ENCODE measurements at regions of chr3 and their contacts with region 1.

Region 1: GRCh38 chr3:160413613-160414248 is 14.3 kb downstream of the SMC4 start:
- DNase-seq: peak; percentile 15 to 84 (median 70)
- ATAC-seq: peak; percentile 86
- H3K4me3 ChIP-seq: no peak overlapping the region
- H3K4me3 Mint-ChIP-seq: no peak overlapping the region
- H3K27ac ChIP-seq: no peak overlapping the region
- H3K27ac Mint-ChIP-seq: no peak overlapping the region
- H3K4me1 ChIP-seq: no peaks in the 10 kb centered on the region
- H3K4me1 Mint-ChIP-seq: peaks cover 5% of the 10 kb centered on the region
- H3K27me3 ChIP-seq: no peaks in the 10 kb centered on the region
- H3K27me3 Mint-ChIP-seq: no peaks in the 10 kb centered on the region
- CTCF ChIP-seq: peak; percentile 99

Region 2: GRCh38 chr3:158845765-158846350 is 1567.9 kb before region 1 on chr3:
- CTCF ChIA-PET with region 1: no interaction called
- POLR2A ChIA-PET with region 1: no interaction called
- intact Hi-C with region 1: loop called (anchors 2 kb)
- DNase-seq: peak in 5 of 9 experiments; percentile 17 to 63 (median 28)
- ATAC-seq: peak; percentile 57
- H3K4me3 ChIP-seq: no peak overlapping the region
- H3K4me3 Mint-ChIP-seq: no peak overlapping the region
- H3K27ac ChIP-seq: no peak overlapping the region
- H3K27ac Mint-ChIP-seq: no peak overlapping the region
- H3K4me1 ChIP-seq: peaks cover 4% of the 10 kb centered on the region
- H3K4me1 Mint-ChIP-seq: peaks cover 9% of the 10 kb centered on the region
- H3K27me3 ChIP-seq: no peaks in the 10 kb centered on the region
- H3K27me3 Mint-ChIP-seq: no peaks in the 10 kb centered on the region
- CTCF ChIP-seq: peak; percentile 87

Region 3: GRCh38 chr3:159828542-159828943 is 585.2 kb before region 1 on chr3:
- CTCF ChIA-PET with region 1: no interaction called
- POLR2A ChIA-PET with region 1: no interaction called
- intact Hi-C with region 1: loop called (anchors 5 kb)
- DNase-seq: peak in 1 of 9 experiments; percentile 18
- ATAC-seq: no peak
- H3K4me3 ChIP-seq: no peak overlapping the region
- H3K4me3 Mint-ChIP-seq: no peak overlapping the region
- H3K27ac ChIP-seq: no peak overlapping the region
- H3K27ac Mint-ChIP-seq: no peak overlapping the region
- H3K4me1 ChIP-seq: no peaks in the 10 kb centered on the region
- H3K4me1 Mint-ChIP-seq: no peaks in the 10 kb centered on the region
- H3K27me3 ChIP-seq: no peaks in the 10 kb centered on the region
- H3K27me3 Mint-ChIP-seq: peaks cover 4% of the 10 kb centered on the region
- CTCF ChIP-seq: no peak

Region 4: DNA sequence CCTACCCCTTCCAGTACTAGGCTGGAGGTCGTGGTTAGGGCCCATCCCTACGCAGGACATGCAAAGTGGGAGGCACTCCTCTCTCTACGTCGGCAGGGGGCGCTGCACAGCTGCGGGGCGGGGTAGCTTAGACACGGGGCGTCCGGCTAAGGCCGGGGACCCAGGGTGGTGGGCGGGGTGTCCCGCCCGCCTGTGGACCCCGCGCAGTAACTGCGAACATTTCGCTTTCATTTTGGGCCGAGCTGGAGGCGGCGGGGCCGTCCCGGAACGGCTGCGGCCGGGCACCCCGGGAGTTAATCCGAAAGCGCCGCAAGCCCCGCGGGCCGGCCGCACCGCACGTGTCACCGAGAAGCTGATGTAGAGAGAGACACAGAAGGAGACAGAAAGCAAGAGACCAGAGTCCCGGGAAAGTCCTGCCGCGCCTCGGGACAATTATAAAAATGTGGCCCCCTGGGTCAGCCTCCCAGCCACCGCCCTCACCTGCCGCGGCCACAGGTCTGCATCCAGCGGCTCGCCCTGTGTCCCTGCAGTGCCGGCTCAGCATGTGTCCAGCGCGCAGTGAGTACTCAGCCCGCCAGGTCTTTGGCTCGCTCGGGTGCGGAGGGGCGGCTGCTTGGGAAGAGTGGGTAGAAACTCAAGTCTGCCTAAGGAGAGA is 425.0 kb before region 1 on chr3 and contains the start of gene IL12A:
- CTCF ChIA-PET with region 1: interaction called, 52 read pairs
- POLR2A ChIA-PET with region 1: no interaction called
- intact Hi-C with region 1: loop called (anchors 1 kb)
- DNase-seq: peak; percentile 68 to 89 (median 84)
- ATAC-seq: peak; percentile 98
- H3K4me3 ChIP-seq: peak within 1 kb of the TSS; percentile 70 to 74
- H3K4me3 Mint-ChIP-seq: peak within 1 kb of the TSS; percentile 87
- H3K27ac ChIP-seq: peak within 1 kb of the TSS; percentile 25 to 28
- H3K27ac Mint-ChIP-seq: peak within 1 kb of the TSS; percentile 27
- H3K4me1 ChIP-seq: peaks cover 15% of the 10 kb centered on the region
- H3K4me1 Mint-ChIP-seq: peaks cover 30% of the 10 kb centered on the region
- H3K27me3 ChIP-seq: no peaks in the 10 kb centered on the region
- H3K27me3 Mint-ChIP-seq: no peaks in the 10 kb centered on the region
- CTCF ChIP-seq: peak; percentile 86
- total RNA-seq, gene IL12A: 2.3 to 2.9 TPM

Region 5: GRCh38 chr3:160163229-160163878 is 250.4 kb before region 1 on chr3:
- CTCF ChIA-PET with region 1: interaction called, 6 read pairs
- POLR2A ChIA-PET with region 1: no interaction called
- intact Hi-C with region 1: loop called in 1 of 2 experiments (anchors 5 kb)
- DNase-seq: peak in 2 of 9 experiments; percentile 10 to 27
- ATAC-seq: no peak
- H3K4me3 ChIP-seq: no peak overlapping the region
- H3K4me3 Mint-ChIP-seq: no peak overlapping the region
- H3K27ac ChIP-seq: no peak overlapping the region
- H3K27ac Mint-ChIP-seq: no peak overlapping the region
- H3K4me1 ChIP-seq: no peaks in the 10 kb centered on the region
- H3K4me1 Mint-ChIP-seq: no peaks in the 10 kb centered on the region
- H3K27me3 ChIP-seq: no peaks in the 10 kb centered on the region
- H3K27me3 Mint-ChIP-seq: no peaks in the 10 kb centered on the region
- CTCF ChIP-seq: no peak

Region 6: GRCh38 chr3:160232014-160232413 is 181.7 kb before region 1 on chr3:
- CTCF ChIA-PET with region 1: no interaction called
- POLR2A ChIA-PET with region 1: no interaction called
- intact Hi-C with region 1: loop called (anchors 5 kb)
- DNase-seq: no peak
- ATAC-seq: no peak
- H3K4me3 ChIP-seq: no peak overlapping the region
- H3K4me3 Mint-ChIP-seq: no peak overlapping the region
- H3K27ac ChIP-seq: no peak overlapping the region
- H3K27ac Mint-ChIP-seq: no peak overlapping the region
- H3K4me1 ChIP-seq: no peaks in the 10 kb centered on the region
- H3K4me1 Mint-ChIP-seq: no peaks in the 10 kb centered on the region
- H3K27me3 ChIP-seq: peaks cover 0 to 3% of the 10 kb centered on the region in 2 experiments
- H3K27me3 Mint-ChIP-seq: peaks cover 25% of the 10 kb centered on the region
- CTCF ChIP-seq: no peak

Region 7: DNA sequence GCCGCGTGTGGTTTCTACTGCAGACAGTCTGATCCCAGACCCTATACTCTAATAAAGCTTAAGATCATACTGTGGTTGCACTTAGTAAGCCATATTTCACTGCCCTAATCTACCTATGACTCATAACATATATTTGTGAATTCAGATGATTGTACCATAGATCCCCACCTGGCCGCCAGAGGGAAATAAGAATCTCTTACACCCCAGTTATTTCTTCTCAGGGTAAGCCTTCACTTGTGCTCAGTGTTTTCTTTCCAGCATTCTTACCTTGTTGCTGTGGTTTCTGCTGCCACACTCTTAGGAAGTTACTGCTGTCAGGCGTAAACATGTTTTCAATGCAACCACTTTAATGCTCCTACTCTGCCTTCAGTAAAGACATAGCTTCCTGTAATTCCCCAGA is 585.5 kb after region 1 on chr3:
- CTCF ChIA-PET with region 1: no interaction called
- POLR2A ChIA-PET with region 1: no interaction called
- intact Hi-C with region 1: no loop called
- DNase-seq: peak in 1 of 9 experiments; percentile 35
- ATAC-seq: peak; percentile 36
- H3K4me3 ChIP-seq: no peak overlapping the region
- H3K4me3 Mint-ChIP-seq: no peak overlapping the region
- H3K27ac ChIP-seq: no peak overlapping the region
- H3K27ac Mint-ChIP-seq: no peak overlapping the region
- H3K4me1 ChIP-seq: no peaks in the 10 kb centered on the region
- H3K4me1 Mint-ChIP-seq: peaks cover 7% of the 10 kb centered on the region
- H3K27me3 ChIP-seq: no peaks in the 10 kb centered on the region
- H3K27me3 Mint-ChIP-seq: no peaks in the 10 kb centered on the region
- CTCF ChIP-seq: no peak

Measured in CD8-positive, alpha-beta T cell (primary cell).